H1 (cell line): ENCODE measurements at regions of chr20 and their contacts with region 1.

Region 1: GRCh38 chr20:40797425-40797824 is 108.4 kb upstream of the MAFB start:
- DNase-seq: no peak
- H3K4me3 ChIP-seq: no peak overlapping the region
- H3K27ac ChIP-seq: no peak overlapping the region
- H3K4me1 ChIP-seq: no peaks in the 10 kb centered on the region
- H3K27me3 ChIP-seq: no peaks in the 10 kb centered on the region
- CTCF ChIP-seq: peak in 2 of 3 experiments; percentile 69 to 71; a peak in 3 of 4 replicates
- EP300 ChIP-seq: no peak
- POLR2A ChIP-seq: no peak
- RAD21 ChIP-seq: peak; percentile 64 to 69

Region 2: DNA sequence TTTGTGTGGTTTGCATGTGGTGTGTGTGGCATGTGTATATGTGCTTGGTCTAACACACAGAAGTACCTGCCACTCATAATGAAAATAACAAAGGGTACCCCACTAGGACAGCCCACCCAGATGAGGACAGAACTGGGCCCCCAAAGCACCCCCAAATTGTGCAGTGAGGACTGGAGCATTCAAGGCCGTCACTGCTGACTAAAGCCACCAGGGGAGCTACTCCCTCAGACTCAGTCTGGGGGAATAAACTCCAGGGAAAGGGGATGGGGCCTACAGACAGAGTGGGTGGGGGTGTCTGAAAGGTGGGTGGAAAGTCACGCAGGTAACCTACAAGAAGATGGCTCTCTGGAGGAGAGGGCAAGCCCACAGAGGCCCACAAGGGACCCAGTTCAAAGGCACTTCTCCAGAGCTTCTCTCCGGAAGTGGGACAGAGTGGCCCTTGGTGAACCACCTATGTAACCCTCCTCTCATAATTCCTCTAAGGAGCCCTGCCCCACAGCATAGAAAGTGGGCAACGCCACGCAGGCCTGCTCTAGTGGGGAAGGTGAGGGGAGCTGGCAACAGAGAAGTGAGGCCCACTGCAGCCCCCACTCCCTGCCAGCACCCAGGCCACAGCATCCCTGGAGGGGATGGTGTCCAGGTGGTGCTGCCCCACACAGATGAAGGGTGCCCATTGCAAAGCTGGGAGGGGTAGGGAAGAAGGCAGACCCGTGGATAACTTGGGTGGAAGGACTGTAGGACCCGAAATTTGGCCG is 14.4 kb after region 1 on chr20:
- CTCF ChIA-PET with region 1: interaction called, 23 read pairs
- POLR2A ChIA-PET with region 1: no interaction called
- DNase-seq: no peak
- H3K4me3 ChIP-seq: no peak overlapping the region
- H3K27ac ChIP-seq: no peak overlapping the region
- H3K4me1 ChIP-seq: no peaks in the 10 kb centered on the region
- H3K27me3 ChIP-seq: no peaks in the 10 kb centered on the region
- CTCF ChIP-seq: peak; percentile 24 to 49 (median 36); a peak in 3 of 4 replicates
- EP300 ChIP-seq: no peak
- POLR2A ChIP-seq: no peak
- RAD21 ChIP-seq: peak; percentile 27 to 45; a peak in 2 of 4 replicates

Region 3: GRCh38 chr20:40938020-40938419 is 140.6 kb after region 1 on chr20:
- CTCF ChIA-PET with region 1: interaction called, 50 read pairs
- POLR2A ChIA-PET with region 1: no interaction called
- DNase-seq: peak in 1 of 2 experiments; percentile 68
- H3K4me3 ChIP-seq: no peak overlapping the region
- H3K27ac ChIP-seq: no peak overlapping the region
- H3K4me1 ChIP-seq: no peaks in the 10 kb centered on the region
- H3K27me3 ChIP-seq: no peaks in the 10 kb centered on the region
- CTCF ChIP-seq: peak; percentile 53 to 68 (median 59)
- EP300 ChIP-seq: no peak
- POLR2A ChIP-seq: no peak
- RAD21 ChIP-seq: peak; percentile 50 to 65; a peak in 3 of 4 replicates

Region 4: GRCh38 chr20:40953856-40954255 is 156.4 kb after region 1 on chr20:
- CTCF ChIA-PET with region 1: interaction called, 13 read pairs
- POLR2A ChIA-PET with region 1: no interaction called
- DNase-seq: peak in 1 of 2 experiments; percentile 8
- H3K4me3 ChIP-seq: no peak overlapping the region
- H3K27ac ChIP-seq: no peak overlapping the region
- H3K4me1 ChIP-seq: no peaks in the 10 kb centered on the region; a peak in 1 of 7 replicates
- H3K27me3 ChIP-seq: no peaks in the 10 kb centered on the region
- CTCF ChIP-seq: no peak
- EP300 ChIP-seq: no peak
- POLR2A ChIP-seq: no peak
- RAD21 ChIP-seq: no peak